HEK293T (cell line): ENCODE measurements at regions of chr3 and their contacts with region 1.

Region 1: DNA sequence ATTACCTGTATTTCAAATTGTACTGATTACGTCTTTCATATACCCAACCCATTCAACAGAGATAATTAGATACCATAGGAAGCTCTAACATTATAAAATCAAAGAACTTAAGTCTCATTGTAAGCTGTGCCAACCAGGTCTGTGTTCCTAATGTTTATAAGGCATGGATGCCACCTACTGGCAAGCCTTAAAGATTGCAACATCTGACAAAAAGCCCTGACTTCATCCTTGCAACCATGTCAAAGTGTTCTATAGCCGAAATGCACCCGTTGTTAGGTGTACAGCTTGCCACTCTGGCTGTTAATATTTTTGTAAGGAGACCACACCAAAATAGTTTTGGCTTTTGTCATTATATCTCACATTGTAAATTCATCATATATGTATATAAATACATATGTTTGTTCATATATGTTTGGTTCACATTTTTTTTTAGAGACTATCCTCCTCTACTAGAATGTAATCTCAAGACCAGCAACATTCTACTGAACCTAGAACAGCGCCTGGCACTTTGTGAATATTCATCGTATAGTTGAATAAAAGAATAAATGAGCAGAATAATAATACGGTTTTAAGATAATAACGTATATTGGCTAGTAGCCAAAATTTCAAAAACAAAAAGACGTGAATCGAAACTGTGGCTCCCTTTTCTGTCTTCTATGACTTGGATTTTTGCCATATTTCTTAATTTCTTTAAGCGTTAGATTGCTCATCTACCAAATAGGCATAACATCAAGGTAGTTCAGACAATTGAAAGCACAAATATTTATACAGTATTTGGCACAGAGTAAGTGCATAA is 258.1 kb downstream of the TBL1XR1 start:
- DNase-seq: peak; percentile 68

Region 2: DNA sequence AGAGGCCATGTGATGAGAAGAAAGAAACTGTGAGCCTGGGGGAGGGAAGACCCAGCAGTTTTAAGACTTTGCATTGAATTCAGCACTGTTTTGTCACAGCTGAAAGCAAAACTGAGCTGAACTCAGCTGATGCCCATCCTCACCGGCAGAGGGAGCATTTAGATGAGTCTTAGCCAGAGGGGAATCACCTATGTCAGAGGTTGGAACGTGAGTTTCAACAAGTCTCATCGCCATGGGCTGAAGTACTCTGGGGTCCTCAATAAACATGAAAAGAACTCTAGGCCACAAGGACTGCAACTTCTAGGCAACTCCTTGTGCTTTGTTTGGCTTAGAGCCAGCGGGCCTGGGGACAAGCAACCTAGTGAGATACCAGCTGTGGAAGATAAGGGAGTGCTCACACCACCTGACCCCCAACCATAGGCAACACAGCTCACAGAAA is 66.4 kb before region 1 on chr3:
- CTCF ChIA-PET with region 1: interaction called, 11 read pairs
- POLR2A ChIA-PET with region 1: no interaction called
- DNase-seq: peak; percentile 54

Region 3: GRCh38 chr3:177089110-177089509 is 149.9 kb after region 1 on chr3:
- CTCF ChIA-PET with region 1: no interaction called
- POLR2A ChIA-PET with region 1: no interaction called
- DNase-seq: no peak